ENCODE measurements at regions of chr1 and their contacts with region 1.

Region 1: DNA sequence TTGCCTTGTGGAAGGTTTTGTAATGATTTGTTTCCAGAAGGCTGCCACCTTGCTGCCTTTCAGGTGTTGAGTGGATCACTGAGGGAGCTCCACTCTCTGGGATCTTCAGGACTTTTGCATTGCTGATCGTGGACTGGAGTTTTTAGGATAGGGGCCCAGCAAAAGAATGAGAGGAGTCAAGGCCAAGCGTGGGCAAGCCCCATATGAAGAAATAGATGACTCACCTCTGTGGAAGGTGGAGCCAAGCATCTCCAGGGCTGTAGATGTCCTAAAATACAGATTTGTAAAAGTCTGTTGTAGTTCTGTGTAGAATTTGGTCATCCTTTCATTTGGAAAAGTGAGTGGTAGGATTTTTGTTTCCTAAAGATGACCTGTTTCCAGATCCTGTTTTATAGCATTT is 67.0 kb downstream of the ST3GAL3 start:
- DNase-seq: no peak
- ATAC-seq: no peak
- H3K4me3 Mint-ChIP-seq: no peak overlapping the region
- H3K27ac Mint-ChIP-seq: no peak overlapping the region
- H3K4me1 Mint-ChIP-seq: peaks cover 7% of the 10 kb centered on the region
- H3K27me3 Mint-ChIP-seq: no peaks in the 10 kb centered on the region

Region 2: DNA sequence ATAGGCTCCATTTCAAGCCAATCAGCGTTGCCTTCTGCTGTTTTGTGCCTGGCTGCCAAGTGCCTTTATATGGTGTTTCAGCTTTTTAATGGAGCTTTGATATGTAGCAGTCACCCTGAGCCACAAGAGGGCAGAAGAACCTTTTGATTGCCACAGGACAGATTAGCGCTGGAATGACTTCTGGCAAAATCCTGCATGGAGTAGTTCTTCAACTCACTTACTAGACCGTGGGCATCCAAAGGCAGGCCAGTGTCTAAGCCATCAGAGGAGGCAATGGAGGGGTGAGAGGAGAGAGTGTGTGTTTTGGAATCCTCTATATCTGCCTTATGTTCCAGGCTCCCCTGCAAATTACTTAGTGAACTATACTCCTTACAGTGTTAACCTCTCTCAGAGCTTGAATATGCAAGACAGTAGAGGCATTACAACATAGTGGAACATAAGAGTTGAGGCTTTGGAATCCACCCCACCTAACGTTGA is 10.8 kb before region 1 on chr1:
- CTCF ChIA-PET with region 1: interaction called, 10 read pairs
- DNase-seq: peak; percentile 57
- ATAC-seq: peak; percentile 85
- H3K4me3 Mint-ChIP-seq: no peak overlapping the region
- H3K27ac Mint-ChIP-seq: no peak overlapping the region
- H3K4me1 Mint-ChIP-seq: no peaks in the 10 kb centered on the region
- H3K27me3 Mint-ChIP-seq: no peaks in the 10 kb centered on the region